ENCODE measurements at regions of chr11 and their contacts with region 1.

Region 1: GRCh38 chr11:2400069-2400760 is at the start of gene TSSC4:
- DNase-seq: peak; percentile 100
- H3K4me3 ChIP-seq: peak within 1 kb of the TSS; percentile 80 to 95
- H3K27ac ChIP-seq: peak within 1 kb of the TSS; percentile 95 to 99
- H3K4me1 ChIP-seq: peaks cover 0 to 31% (median 26%) of the 10 kb centered on the region in 4 donors
- H3K27me3 ChIP-seq: no peaks in the 10 kb centered on the region
- CTCF ChIP-seq: peak; percentile 96 to 98

Region 2: DNA sequence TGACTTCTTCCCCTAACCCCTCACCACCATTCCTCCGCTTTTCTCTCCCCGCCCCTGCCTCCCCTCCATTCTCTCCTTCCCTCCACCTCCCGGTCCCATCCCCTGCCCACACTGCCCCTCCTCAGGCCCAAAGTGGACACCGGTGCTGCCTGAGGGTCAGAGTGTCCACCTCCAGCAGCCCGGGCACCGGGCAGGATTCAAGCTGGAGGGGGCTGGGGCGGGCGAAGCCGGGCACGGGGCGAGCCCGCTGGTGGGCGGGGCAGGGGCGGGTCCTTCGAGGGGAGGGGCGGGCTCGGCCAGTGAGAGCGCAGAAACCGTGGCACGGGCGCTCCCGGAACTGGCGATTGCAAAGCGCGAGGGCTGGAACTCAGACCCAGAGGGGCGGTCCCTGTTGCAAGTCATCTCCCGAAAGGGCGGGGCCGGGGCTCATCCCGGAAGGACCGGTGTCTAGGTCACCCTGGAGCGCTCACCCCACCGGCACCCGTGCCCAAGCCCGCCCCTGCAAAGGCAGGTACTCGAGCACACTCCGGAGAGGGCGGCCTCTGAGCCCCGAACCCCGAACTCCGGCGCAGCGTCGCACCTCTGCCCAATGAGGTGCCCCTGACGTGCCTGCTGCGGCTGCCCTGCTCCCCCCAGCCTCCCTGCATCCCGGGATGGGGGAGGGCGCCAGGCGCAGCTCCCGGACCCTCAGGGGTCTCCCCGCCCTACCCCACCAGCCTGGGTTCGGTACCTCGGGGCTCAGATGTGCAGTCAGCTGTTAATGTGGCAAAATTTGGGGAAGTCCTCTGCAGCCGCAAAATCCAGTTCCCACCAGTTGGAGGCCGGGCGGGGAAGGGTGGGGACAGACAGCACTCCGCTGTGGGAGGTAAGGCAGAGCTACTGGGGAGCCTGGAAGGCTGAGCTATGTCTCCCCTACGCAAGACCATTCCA is 501.9 kb after region 1 on chr11:
- intact Hi-C with region 1: loop called (anchors 10 kb)
- DNase-seq: peak; percentile 96 to 98
- H3K4me3 ChIP-seq: peak overlapping the region; percentile 63 to 67
- H3K27ac ChIP-seq: peak overlapping the region; percentile 71 to 73
- H3K4me1 ChIP-seq: peaks cover 0 to 46% (median 25%) of the 10 kb centered on the region in 4 donors
- H3K27me3 ChIP-seq: peaks cover 0 to under 1% of the 10 kb centered on the region in 2 donors
- CTCF ChIP-seq: no peak